ENCODE measurements at regions of chr21 and their contacts with region 1.

Region 1: GRCh38 chr21:42258153-42258884 is 39.4 kb downstream of the ABCG1 start:
- DNase-seq: peak; percentile 49 to 92
- H3K4me3 ChIP-seq: no peak overlapping the region
- H3K27ac ChIP-seq: no peak overlapping the region
- H3K4me1 ChIP-seq: peaks cover 0 to 4% (median 3%) of the 10 kb centered on the region in 4 experiments; a peak in 2 of 7 replicates
- H3K27me3 ChIP-seq: no peaks in the 10 kb centered on the region; a peak in 1 of 7 replicates
- CTCF ChIP-seq: peak; percentile 88 to 97 (median 92)
- EP300 ChIP-seq: no peak
- POLR2A ChIP-seq: no peak
- RAD21 ChIP-seq: peak; percentile 66 to 83

Region 2: GRCh38 chr21:42047821-42048613 is 210.3 kb before region 1 on chr21:
- CTCF ChIA-PET with region 1: no interaction called
- POLR2A ChIA-PET with region 1: no interaction called
- DNase-seq: no peak
- H3K4me3 ChIP-seq: no peak overlapping the region
- H3K27ac ChIP-seq: no peak overlapping the region
- H3K4me1 ChIP-seq: no peaks in the 10 kb centered on the region; a peak in 1 of 7 replicates
- H3K27me3 ChIP-seq: no peaks in the 10 kb centered on the region
- CTCF ChIP-seq: no peak
- EP300 ChIP-seq: no peak
- POLR2A ChIP-seq: no peak
- RAD21 ChIP-seq: no peak

Region 3: DNA sequence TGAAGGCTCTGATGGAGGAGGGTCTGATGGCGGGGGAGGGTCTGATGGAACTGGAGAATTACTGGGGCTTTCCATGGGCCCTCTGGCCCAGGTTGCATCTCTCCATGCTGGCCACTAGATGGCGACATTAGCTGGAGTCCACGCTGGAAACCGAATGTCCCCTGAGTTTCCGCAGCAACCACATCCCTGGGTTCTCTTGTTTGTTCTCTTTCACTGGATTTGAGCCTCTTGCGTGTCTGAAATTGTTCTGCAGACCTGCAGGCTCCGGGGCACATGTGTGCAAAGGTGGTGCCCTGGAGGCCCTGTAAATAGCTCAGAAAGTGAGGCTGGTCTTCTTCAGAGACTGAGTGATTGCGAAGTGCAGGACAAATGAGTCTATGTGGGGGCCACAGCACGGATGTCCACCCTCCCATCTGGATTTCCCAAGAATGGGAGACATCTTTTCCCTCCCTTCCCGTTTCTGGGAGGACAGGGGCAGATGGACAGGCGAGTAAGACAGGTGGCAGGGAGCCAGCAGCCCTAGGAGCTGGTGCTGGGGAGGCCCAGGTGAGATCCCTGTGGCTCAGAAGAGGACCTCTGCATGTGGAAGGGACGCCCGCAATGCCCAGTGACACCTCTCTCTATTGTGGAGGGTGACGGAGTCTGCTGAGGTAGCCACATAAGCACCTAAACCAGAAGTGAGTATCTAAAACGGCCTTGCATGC is 112.6 kb before region 1 on chr21:
- CTCF ChIA-PET with region 1: interaction called, 32 read pairs
- POLR2A ChIA-PET with region 1: no interaction called
- DNase-seq: peak; percentile 7 to 74
- H3K4me3 ChIP-seq: no peak overlapping the region
- H3K27ac ChIP-seq: no peak overlapping the region
- H3K4me1 ChIP-seq: no peaks in the 10 kb centered on the region
- H3K27me3 ChIP-seq: no peaks in the 10 kb centered on the region; a peak in 1 of 7 replicates
- CTCF ChIP-seq: peak; percentile 81 to 91 (median 88)
- EP300 ChIP-seq: no peak
- POLR2A ChIP-seq: no peak
- RAD21 ChIP-seq: peak; percentile 94 to 96

Region 4: DNA sequence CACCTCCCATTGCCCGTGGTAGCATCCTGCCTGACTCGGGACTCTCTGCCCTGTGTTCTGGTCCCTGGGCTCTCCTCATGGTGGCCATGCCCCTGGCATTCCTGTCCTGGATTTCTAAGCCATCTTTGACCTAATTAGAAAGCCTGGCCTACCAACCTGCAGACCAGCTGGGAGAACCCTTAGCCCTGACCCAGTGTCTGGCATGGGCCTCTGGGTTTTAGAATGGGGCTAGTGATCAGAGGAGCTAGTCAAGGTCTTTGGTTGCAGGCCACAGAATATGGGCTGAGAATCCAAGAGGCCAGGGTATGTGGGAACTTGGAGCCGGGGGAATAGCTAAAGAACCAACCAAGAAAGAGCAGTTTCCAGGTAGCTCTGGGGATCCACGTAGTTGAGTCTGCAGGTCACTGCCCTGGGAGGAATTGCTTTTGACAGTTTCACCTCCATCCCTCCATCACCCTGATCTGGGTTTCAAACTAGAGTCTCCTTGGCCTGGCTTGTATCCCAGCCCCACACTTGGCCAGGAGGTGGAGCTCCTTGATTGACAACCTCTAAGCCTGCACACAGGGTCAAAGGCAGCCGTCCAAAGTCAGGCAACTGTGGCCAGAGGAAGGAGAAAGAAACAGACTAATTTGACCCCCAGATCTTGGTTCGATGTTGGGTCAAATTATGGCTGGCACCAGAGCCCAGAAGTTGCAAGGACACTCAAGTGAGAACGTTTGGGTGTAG is 94.1 kb before region 1 on chr21:
- CTCF ChIA-PET with region 1: interaction called, 31 read pairs
- POLR2A ChIA-PET with region 1: no interaction called
- DNase-seq: peak in 1 of 2 experiments; percentile 7
- H3K4me3 ChIP-seq: no peak overlapping the region
- H3K27ac ChIP-seq: no peak overlapping the region
- H3K4me1 ChIP-seq: peaks cover 0 to 5% (median 2%) of the 10 kb centered on the region in 4 experiments; a peak in 5 of 7 replicates
- H3K27me3 ChIP-seq: no peaks in the 10 kb centered on the region
- CTCF ChIP-seq: peak; percentile 57 to 73 (median 71)
- EP300 ChIP-seq: no peak
- POLR2A ChIP-seq: no peak
- RAD21 ChIP-seq: peak; percentile 77 to 88

Region 5: DNA sequence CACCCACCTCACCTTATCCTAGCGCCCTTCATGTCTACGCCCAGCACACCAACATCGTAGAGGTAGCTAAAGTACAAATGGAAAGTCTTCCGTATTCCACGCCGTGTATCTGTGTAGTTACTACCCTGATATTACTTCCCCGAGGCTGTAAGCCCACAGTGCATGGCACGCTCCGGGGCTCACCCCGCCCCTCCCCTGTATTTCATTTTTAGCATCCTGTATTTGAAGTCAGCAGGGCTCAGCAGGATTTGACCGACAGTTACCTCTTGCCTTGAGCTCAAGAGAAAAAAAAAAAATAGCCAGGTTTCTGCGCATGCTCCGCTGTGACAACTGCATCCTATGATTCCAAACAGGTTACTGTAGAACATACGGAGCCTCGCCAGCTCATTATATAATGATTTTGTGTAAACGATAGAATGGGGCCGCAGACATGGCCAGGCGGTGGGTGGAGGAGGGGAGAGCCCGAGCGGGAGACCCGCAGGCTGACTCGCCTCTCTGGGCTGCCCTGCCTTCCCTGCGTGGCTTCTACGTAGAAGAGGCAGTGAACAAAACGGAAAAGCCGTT is 38.1 kb before region 1 on chr21:
- CTCF ChIA-PET with region 1: interaction called, 11 read pairs
- POLR2A ChIA-PET with region 1: no interaction called
- DNase-seq: peak in 1 of 2 experiments; percentile 76
- H3K4me3 ChIP-seq: peak overlapping the region; percentile 59 to 89 (median 67)
- H3K27ac ChIP-seq: no peak overlapping the region
- H3K4me1 ChIP-seq: peaks cover 0 to 4% (median 2%) of the 10 kb centered on the region in 4 experiments; a peak in 4 of 7 replicates
- H3K27me3 ChIP-seq: peaks cover 8 to 40% (median 23%) of the 10 kb centered on the region in 4 experiments
- CTCF ChIP-seq: no peak
- EP300 ChIP-seq: no peak
- POLR2A ChIP-seq: no peak
- RAD21 ChIP-seq: no peak

Region 6: GRCh38 chr21:42276526-42277154 is 18.3 kb after region 1 on chr21:
- CTCF ChIA-PET with region 1: interaction called, 50 read pairs
- POLR2A ChIA-PET with region 1: no interaction called
- DNase-seq: no peak
- H3K4me3 ChIP-seq: no peak overlapping the region
- H3K27ac ChIP-seq: no peak overlapping the region
- H3K4me1 ChIP-seq: no peaks in the 10 kb centered on the region
- H3K27me3 ChIP-seq: no peaks in the 10 kb centered on the region
- CTCF ChIP-seq: peak in 2 of 3 experiments; percentile 30 to 37; a peak in 3 of 4 replicates
- EP300 ChIP-seq: no peak
- POLR2A ChIP-seq: no peak
- RAD21 ChIP-seq: peak; percentile 43 to 49; a peak in 3 of 4 replicates

Region 7: DNA sequence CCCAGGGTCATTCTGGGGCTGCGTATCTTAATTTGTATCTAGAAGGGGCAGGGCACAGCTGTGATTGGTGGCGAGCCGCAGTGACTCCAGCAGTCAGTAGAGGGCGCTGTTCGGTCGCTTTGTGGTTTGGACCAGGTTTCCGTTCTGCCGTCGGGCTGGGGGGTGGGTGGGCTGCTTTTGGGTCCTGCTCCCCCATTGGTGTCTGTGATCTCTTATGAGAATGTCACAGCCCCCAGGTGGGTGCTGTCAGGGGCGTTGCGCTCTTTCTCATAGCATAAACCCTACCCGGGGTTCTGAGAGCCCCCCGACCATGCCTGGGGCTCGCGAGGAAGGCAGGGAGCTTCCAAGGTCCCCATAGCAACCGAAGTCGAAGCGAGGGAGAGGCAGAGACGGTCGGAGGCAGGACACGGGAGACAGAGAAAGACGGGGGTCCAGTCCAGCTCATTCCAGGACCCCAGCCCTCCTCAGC is 51.5 kb after region 1 on chr21:
- CTCF ChIA-PET with region 1: interaction called, 12 read pairs
- POLR2A ChIA-PET with region 1: no interaction called
- DNase-seq: peak in 1 of 2 experiments; percentile 96
- H3K4me3 ChIP-seq: peak overlapping the region in 3 of 4 experiments; percentile 28 to 54 (median 30); a peak in 4 of 8 replicates
- H3K27ac ChIP-seq: no peak overlapping the region
- H3K4me1 ChIP-seq: peaks cover 4 to 14% (median 6%) of the 10 kb centered on the region in 4 experiments
- H3K27me3 ChIP-seq: peaks cover 0 to 7% (median 3%) of the 10 kb centered on the region in 4 experiments; a peak in 2 of 7 replicates
- CTCF ChIP-seq: peak in 2 of 3 experiments; percentile 85 to 88; a peak in 3 of 4 replicates
- EP300 ChIP-seq: no peak
- POLR2A ChIP-seq: no peak
- RAD21 ChIP-seq: peak; percentile 77 to 86

Region 8: DNA sequence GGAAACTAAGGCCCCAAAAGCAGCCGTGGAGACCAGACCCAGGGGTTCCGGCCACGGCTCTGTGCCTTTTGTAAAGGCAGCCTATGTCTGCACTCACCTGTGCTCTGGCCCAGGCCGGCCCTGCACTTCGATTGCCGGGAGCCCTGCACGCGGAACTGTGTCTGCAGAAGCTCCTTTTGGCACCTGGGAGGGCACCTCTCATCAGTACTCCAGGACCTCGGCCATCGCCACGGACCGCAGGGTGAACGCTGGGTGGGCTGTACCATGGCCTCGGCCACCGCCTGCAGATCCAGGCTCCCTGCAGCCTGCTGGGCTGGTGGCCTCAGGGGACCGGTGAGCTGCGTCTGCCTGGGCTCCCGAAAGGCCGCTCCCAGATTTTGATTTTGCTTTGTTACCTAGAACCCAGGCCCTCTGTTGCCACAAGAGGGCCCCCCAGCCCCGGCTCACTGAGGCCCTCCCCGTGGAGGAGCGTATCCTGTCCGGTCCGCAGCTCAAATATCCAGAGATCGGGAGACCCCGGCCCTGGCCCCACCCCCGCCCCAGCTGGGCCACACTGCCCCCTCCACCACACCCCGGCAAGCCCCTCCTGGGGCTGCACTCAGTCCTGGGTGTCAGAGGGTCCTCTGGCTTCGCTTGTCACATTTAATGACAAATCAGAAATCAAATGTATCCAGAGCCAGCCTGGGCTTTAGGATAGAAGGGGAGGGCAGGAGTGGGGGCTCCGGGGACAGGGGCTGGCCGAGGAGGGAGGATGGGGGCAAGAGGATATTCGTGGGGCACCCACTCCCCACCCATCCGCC is 334.9 kb after region 1 on chr21:
- CTCF ChIA-PET with region 1: no interaction called
- POLR2A ChIA-PET with region 1: no interaction called
- DNase-seq: peak; percentile 34 to 85
- H3K4me3 ChIP-seq: peak overlapping the region in 1 of 4 experiments; percentile 42; a peak in 1 of 8 replicates
- H3K27ac ChIP-seq: no peak overlapping the region
- H3K4me1 ChIP-seq: peaks cover 0 to 4% (median 2%) of the 10 kb centered on the region in 4 experiments; a peak in 5 of 7 replicates
- H3K27me3 ChIP-seq: no peaks in the 10 kb centered on the region; a peak in 1 of 7 replicates
- CTCF ChIP-seq: peak; percentile 61 to 92 (median 72)
- EP300 ChIP-seq: no peak
- POLR2A ChIP-seq: no peak
- RAD21 ChIP-seq: peak; percentile 90 to 93